PC-9 (cell line): ENCODE measurements at regions of chr3 and their contacts with region 1.

Region 1: GRCh38 chr3:114168150-114168549 is 10.7 kb downstream of the DRD3 start:
- DNase-seq: no peak
- H3K4me3 ChIP-seq: no peak overlapping the region
- H3K27ac ChIP-seq: no peak overlapping the region
- H3K4me1 ChIP-seq: no peaks in the 10 kb centered on the region
- H3K27me3 ChIP-seq: peaks cover 24% of the 10 kb centered on the region; the same call in 1 of the 2 replicates
- CTCF ChIP-seq: no peak

Region 2: GRCh38 chr3:113454057-113454456 is 714.1 kb before region 1 on chr3:
- CTCF ChIA-PET with region 1: no interaction called
- POLR2A ChIA-PET with region 1: interaction called, 14 read pairs
- intact Hi-C with region 1: no loop called
- DNase-seq: no peak
- H3K4me3 ChIP-seq: no peak overlapping the region
- H3K27ac ChIP-seq: no peak overlapping the region
- H3K4me1 ChIP-seq: no peaks in the 10 kb centered on the region
- H3K27me3 ChIP-seq: no peaks in the 10 kb centered on the region
- CTCF ChIP-seq: no peak

Region 3: GRCh38 chr3:114186501-114186900 is 18.4 kb after region 1 on chr3:
- CTCF ChIA-PET with region 1: no interaction called
- POLR2A ChIA-PET with region 1: no interaction called
- intact Hi-C with region 1: no loop called
- DNase-seq: no peak
- H3K4me3 ChIP-seq: no peak overlapping the region
- H3K27ac ChIP-seq: no peak overlapping the region
- H3K4me1 ChIP-seq: no peaks in the 10 kb centered on the region
- H3K27me3 ChIP-seq: no peaks in the 10 kb centered on the region; the same call in 1 of the 2 replicates
- CTCF ChIP-seq: no peak

Region 4: GRCh38 chr3:114370537-114371174 is 202.5 kb after region 1 on chr3:
- CTCF ChIA-PET with region 1: no interaction called
- POLR2A ChIA-PET with region 1: no interaction called
- intact Hi-C with region 1: no loop called
- DNase-seq: no peak
- H3K4me3 ChIP-seq: no peak overlapping the region
- H3K27ac ChIP-seq: no peak overlapping the region
- H3K4me1 ChIP-seq: no peaks in the 10 kb centered on the region
- H3K27me3 ChIP-seq: no peaks in the 10 kb centered on the region
- CTCF ChIP-seq: no peak; the same call in 1 of the 2 replicates